Activated T-helper 2 cell treated with anti-CD3 and anti-CD28 coated beads, Interferon-gamma antibody, Interleukin-2, Interleukin-4, amounts not matched to agents 10 μg/mL and 5 μg/mL and 100 μg/mL, durations not matched to agents 14 hours and 24 hours and 36 hours (primary cell): ENCODE measurements at regions of chr10 and their contacts with region 1.

Region 1: GRCh38 chr10:12448729-12449391 is 99.5 kb downstream of the CAMK1D start:
- DNase-seq: peak; percentile 76
- H3K4me3 Mint-ChIP-seq: peak overlapping the region; percentile 59
- H3K27ac Mint-ChIP-seq: peak overlapping the region; percentile 71
- H3K4me1 Mint-ChIP-seq: peaks cover 21% of the 10 kb centered on the region
- H3K27me3 Mint-ChIP-seq: peaks cover 43% of the 10 kb centered on the region

Region 2: DNA sequence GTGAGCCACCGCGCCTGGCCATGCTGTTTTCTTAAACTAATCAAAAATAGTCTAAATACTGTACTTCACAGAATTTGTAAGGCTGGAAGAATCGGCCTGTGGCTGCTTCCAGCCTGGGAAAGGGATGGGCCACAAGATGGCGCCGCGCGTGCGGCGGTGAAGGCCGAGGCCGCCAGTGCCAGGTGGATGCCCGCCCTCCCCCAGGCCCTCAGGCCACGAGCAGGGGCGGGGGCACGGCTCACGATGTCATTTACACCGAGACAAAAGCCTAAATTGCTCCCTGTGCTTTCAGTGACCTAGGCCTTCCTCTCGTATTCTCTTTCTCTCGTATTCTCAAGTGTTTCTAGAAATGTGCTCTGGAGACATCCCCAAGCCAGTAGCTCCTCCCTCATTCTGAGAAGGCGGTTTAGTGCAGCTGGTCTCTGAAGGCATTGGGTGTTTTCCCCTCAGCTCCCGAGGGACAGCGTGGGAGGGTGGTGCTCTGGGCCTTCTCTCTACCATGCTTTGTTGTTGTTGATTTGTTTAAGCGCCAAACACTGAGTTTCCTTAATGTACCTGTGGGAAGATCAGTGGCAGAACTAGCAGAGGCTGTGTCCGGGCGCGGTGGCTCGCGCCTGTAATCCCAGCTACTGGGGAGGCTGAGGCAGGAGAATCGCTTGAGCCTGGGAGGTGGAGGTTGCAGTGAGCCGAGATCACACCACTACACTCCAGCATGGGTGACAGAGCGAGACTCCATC is 184.5 kb before region 1 on chr10:
- intact Hi-C with region 1: loop called (anchors 10 kb)
- DNase-seq: peak; percentile 56
- H3K4me3 Mint-ChIP-seq: peak overlapping the region; percentile 75
- H3K27ac Mint-ChIP-seq: peak overlapping the region; percentile 85
- H3K4me1 Mint-ChIP-seq: peaks cover 17% of the 10 kb centered on the region
- H3K27me3 Mint-ChIP-seq: no peaks in the 10 kb centered on the region

Region 3: GRCh38 chr10:12369982-12370381 is 78.9 kb before region 1 on chr10:
- intact Hi-C with region 1: loop called (anchors 5 kb)
- DNase-seq: no peak
- H3K4me3 Mint-ChIP-seq: no peak overlapping the region
- H3K27ac Mint-ChIP-seq: no peak overlapping the region
- H3K4me1 Mint-ChIP-seq: peaks cover 14% of the 10 kb centered on the region
- H3K27me3 Mint-ChIP-seq: no peaks in the 10 kb centered on the region

Region 4: DNA sequence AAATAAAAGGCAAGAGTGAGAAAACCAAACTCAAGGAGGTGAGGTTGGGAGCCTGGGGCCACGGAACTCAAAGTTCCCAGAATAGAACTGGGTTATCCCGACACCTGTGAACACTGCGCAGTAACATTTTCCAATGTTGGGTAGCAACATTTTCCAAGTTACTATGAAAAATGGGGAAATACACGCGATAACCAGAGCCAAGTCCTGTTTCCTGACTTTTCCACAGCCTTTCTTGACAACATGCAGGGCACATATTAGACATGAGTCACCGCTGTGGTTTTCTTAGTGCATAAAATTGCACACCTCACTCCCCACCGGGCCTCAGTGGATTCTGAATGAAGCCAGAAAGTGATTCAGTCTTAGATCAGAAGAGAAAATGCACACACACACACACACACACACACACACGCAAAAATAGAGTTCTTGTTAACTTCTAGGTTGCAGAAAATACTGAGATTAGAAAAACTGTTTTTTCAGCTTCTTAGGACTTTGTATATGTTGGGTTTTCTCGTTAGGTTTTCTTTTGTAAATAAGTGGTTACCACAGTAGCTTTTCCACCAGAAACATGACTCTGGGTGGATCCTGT is 29.5 kb before region 1 on chr10:
- intact Hi-C with region 1: loop called (anchors 2 kb)
- DNase-seq: peak; percentile 13
- H3K4me3 Mint-ChIP-seq: no peak overlapping the region
- H3K27ac Mint-ChIP-seq: no peak overlapping the region
- H3K4me1 Mint-ChIP-seq: peaks cover 13% of the 10 kb centered on the region
- H3K27me3 Mint-ChIP-seq: peaks cover under 1% of the 10 kb centered on the region

Region 5: GRCh38 chr10:12710594-12711349 is 261.9 kb after region 1 on chr10:
- intact Hi-C with region 1: loop called (anchors 5 kb)
- DNase-seq: peak; percentile 73
- H3K4me3 Mint-ChIP-seq: no peak overlapping the region
- H3K27ac Mint-ChIP-seq: peak overlapping the region; percentile 79
- H3K4me1 Mint-ChIP-seq: peaks cover 53% of the 10 kb centered on the region
- H3K27me3 Mint-ChIP-seq: no peaks in the 10 kb centered on the region